Colonic mucosa (tissue), 4 donors: ENCODE measurements at regions of chr10 and their contacts with region 1.

Region 1: GRCh38 chr10:60646966-60647796 is 131.1 kb upstream of the CDK1 start:
- DNase-seq: peak; percentile 56
- H3K4me3 ChIP-seq: no peak overlapping the region
- H3K27ac ChIP-seq: no peak overlapping the region
- H3K4me1 ChIP-seq: no peaks in the 10 kb centered on the region
- H3K27me3 ChIP-seq: no peaks in the 10 kb centered on the region
- CTCF ChIP-seq: peak; percentile 59

Region 2: GRCh38 chr10:59830601-59831259 is 816.5 kb before region 1 on chr10:
- intact Hi-C with region 1: no loop called
- DNase-seq: peak; percentile 66
- H3K4me3 ChIP-seq: no peak overlapping the region
- H3K27ac ChIP-seq: no peak overlapping the region
- H3K4me1 ChIP-seq: no peaks in the 10 kb centered on the region
- H3K27me3 ChIP-seq: no peaks in the 10 kb centered on the region
- CTCF ChIP-seq: peak; percentile 69

Region 3: DNA sequence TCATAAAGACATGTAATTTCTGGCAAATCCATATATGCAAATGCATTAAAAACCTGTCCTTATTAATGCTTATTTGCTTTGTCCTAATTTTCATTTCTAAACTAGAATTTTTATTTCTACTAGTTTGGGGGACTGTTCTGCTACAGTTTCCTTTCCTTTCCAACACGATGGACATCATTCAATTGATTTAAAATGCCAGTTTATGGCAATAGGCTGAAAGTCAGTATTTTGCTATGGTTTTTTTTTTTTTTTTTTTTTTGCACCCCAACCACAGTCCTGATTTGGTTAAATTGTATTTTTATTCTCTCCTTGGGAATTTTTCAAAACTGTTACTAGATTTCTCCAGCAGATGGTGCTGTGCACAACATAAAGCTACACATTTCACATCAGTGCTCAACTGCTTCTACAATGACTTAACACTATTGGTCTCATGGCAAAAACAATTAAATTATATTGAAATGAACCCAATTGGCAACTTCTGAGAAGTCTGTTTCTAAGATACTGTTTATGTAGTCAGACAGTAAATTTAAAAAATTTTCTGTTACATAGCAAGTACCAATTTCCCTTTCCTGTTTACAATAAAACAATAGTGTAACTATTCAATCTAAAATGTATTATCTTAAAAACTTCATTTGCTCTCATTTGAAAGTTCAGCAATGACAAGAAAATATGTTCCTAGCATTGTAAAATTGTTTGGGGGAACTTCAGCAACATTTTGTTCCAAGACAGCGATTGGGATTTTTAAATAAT is 547.0 kb before region 1 on chr10:
- intact Hi-C with region 1: loop called (anchors 10 kb)
- DNase-seq: peak; percentile 26
- H3K4me3 ChIP-seq: no peak overlapping the region
- H3K27ac ChIP-seq: no peak overlapping the region
- H3K4me1 ChIP-seq: no peaks in the 10 kb centered on the region
- H3K27me3 ChIP-seq: no peaks in the 10 kb centered on the region
- CTCF ChIP-seq: peak; percentile 49

Region 4: GRCh38 chr10:60237977-60238758 is 409.0 kb before region 1 on chr10:
- intact Hi-C with region 1: loop called (anchors 10 kb)
- DNase-seq: no peak
- H3K4me3 ChIP-seq: no peak overlapping the region
- H3K27ac ChIP-seq: no peak overlapping the region
- H3K4me1 ChIP-seq: no peaks in the 10 kb centered on the region
- H3K27me3 ChIP-seq: no peaks in the 10 kb centered on the region
- CTCF ChIP-seq: no peak

Region 5: GRCh38 chr10:60444494-60445064 is 202.6 kb before region 1 on chr10:
- intact Hi-C with region 1: loop called (anchors 2 kb)
- DNase-seq: no peak
- H3K4me3 ChIP-seq: no peak overlapping the region
- H3K27ac ChIP-seq: no peak overlapping the region
- H3K4me1 ChIP-seq: no peaks in the 10 kb centered on the region
- H3K27me3 ChIP-seq: no peaks in the 10 kb centered on the region
- CTCF ChIP-seq: peak; percentile 34

Region 6: DNA sequence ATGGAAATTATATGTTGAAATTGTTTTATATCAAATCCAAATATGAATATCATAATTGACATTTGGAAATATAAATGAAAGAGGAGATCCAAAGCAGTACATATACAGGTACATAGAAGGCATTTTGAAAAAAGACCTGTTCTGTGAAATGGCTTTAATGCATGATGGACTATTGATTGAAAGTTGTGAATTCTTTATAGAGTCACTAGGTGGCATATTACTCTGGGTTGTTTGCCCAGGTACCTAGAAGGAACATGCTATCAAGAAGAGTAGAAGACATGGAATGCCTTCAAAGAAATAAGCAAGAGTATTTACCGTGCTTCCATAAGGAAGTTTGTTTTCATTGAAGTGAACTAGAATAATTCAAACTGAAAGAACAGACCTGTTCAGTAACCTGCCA is 97.5 kb before region 1 on chr10:
- intact Hi-C with region 1: loop called (anchors 10 kb)
- DNase-seq: no peak
- H3K4me3 ChIP-seq: no peak overlapping the region
- H3K27ac ChIP-seq: no peak overlapping the region
- H3K4me1 ChIP-seq: no peaks in the 10 kb centered on the region
- H3K27me3 ChIP-seq: no peaks in the 10 kb centered on the region
- CTCF ChIP-seq: no peak

Region 7: DNA sequence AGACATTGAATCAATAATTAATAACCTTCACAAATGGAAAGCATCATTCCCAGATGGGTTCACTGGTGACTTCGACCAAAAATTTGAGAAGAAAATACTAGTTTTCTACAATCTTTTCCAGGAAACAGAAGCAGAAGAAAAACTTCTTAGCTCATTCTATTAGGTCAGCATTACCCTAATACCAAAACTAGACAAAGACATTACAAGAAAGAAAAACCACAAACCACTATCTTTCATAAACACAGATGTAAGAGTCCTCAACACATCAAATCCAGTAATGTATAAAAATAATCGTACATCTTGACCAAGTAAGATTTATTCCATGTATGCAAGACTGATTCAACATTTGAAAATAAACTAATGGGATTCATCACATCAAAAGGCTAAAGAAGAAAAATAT is 67.1 kb after region 1 on chr10:
- intact Hi-C with region 1: no loop called
- DNase-seq: no peak
- H3K4me3 ChIP-seq: no peak overlapping the region
- H3K27ac ChIP-seq: no peak overlapping the region
- H3K4me1 ChIP-seq: no peaks in the 10 kb centered on the region
- H3K27me3 ChIP-seq: no peaks in the 10 kb centered on the region
- CTCF ChIP-seq: no peak